ENCODE measurements at regions of chr13 and their contacts with region 1.

Region 1: GRCh38 chr13:109126891-109127641 is 497.7 kb downstream of the MYO16 start:
- DNase-seq: no peak
- H3K4me3 ChIP-seq: no peak overlapping the region
- CTCF ChIP-seq: no peak

Region 2: GRCh38 chr13:109087916-109088623 is 39.0 kb before region 1 on chr13:
- in situ Hi-C with region 1: loop called (anchors 5 kb)
- DNase-seq: no peak
- H3K4me3 ChIP-seq: no peak overlapping the region
- CTCF ChIP-seq: no peak